ENCODE measurements at regions of chr3 and their contacts with region 1.

Region 1: DNA sequence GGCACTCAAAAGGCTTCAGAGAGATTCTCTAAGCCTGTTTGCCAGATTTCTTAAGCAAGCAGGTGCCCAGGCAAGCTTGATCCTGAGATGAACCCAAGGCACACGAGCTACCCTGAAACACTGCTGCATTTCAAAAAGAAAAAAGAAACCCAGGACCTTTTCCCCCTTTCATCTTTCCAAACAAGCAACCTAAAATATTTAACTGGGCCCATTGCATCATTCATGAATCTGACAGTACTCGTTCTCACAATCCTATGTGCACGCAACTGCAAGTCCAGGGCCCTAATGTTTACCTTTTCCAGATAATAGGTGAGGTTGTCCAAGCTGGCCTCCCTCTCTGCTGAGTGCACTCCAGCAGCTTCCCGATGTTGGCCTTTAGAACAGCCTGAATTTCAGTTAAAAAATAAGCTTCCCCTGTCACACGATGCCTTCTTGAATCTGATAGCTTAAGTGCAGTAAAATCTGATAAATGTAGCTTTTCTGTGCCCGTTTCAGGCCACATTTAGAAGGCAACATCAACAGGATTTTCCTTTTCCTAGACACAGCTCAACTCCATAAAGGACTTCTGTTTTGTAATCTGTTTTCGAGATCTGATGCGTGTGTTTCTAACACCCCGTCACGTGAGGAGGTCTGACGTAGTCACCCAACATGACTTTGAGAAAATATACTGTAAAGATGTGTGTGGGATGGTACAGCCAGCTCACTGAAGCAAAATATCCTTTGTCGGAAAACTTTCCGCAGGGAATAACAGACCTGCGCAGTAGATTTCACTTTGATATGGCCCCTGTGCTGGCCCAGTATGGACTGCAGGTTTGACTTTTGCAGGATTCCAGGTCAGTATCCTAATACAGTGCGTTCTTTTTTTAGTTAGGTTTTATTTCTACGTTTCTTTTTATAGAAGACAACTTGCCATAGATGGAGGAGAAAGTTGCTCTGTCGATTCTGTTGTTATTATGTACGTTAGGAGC is 55.1 kb upstream of the RASA2 start:
- DNase-seq: no peak
- CTCF ChIP-seq: no peak

Region 2: DNA sequence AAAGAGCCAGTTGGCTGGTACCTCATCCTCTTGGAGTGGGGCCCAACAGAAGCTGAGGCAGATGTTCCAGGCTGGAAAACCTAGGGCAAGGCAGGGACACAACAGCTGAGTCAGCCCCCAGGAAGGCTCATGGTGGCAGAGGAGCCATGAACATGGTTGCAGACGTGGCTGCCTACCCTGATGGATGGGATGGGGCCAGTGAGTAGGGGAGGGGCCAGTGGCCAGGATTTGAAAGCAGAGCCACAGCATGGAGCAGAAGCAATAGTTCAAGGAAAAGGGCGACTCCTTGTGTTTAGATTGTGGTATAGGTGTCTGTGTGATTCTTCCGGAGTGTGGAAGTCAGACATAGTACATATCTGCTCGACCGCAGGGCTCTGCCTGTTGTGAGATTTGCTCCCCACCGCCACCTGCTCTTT is 175.8 kb before region 1 on chr3:
- CTCF ChIA-PET with region 1: no interaction called
- POLR2A ChIA-PET with region 1: no interaction called
- DNase-seq: peak; percentile 32
- CTCF ChIP-seq: peak; percentile 17

Region 3: GRCh38 chr3:141412087-141412935 is 19.4 kb before region 1 on chr3:
- CTCF ChIA-PET with region 1: interaction called, 12 read pairs
- POLR2A ChIA-PET with region 1: no interaction called
- DNase-seq: peak; percentile 39
- CTCF ChIP-seq: no peak

Region 4: DNA sequence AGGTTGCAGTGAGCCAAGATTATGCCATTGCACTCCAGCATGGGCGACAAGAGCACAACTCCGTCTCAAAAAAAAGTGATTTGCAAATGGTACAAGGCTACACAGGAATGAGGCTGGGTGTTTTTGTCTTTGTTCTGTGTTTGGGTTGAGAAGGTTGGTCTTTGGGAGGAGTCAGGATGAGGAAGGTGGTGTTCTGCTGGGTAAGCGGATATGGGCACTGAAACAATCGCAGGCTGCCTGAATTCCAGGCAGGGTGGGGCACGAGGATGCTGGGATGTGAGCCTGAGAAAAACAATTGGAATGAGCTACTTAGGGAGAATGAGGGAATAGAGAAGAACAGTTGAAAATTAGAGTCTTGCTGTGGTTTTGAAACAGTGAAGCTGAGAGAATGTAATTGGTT is 11.8 kb before region 1 on chr3:
- CTCF ChIA-PET with region 1: interaction called, 11 read pairs
- POLR2A ChIA-PET with region 1: no interaction called
- DNase-seq: no peak
- CTCF ChIP-seq: no peak